Gastrocnemius medialis (tissue), 4 donors: ENCODE measurements at regions of chr19 and their contacts with region 1.

Region 1: DNA sequence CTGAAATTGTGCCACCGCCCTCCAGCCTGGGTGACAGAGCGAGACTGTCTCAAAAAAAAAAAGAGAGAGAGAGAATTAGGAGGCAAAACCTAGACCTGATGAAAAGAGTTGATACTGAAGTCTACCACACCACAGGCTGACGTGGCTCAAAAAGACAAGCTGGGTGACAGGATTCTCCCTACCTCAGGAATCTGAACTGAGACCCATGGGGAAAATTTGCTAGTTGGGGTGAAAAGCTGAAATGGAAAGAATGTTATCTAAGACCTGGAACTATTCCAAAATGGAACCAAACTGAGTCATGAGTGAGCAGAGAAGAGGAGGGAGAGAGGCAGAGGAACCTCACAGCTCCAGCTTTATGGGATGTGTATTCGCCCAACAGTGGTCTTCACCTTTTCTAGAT is 11.7 kb downstream of the SMG9 start:
- DNase-seq: no peak
- ATAC-seq: no peak
- H3K4me3 ChIP-seq: no peak overlapping the region
- H3K27ac ChIP-seq: no peak overlapping the region
- H3K4me1 ChIP-seq: no peaks in the 10 kb centered on the region
- H3K27me3 ChIP-seq: no peaks in the 10 kb centered on the region
- CTCF ChIP-seq: no peak
- POLR2A ChIP-seq: no peak

Region 2: GRCh38 chr19:43784981-43785808 is 42.2 kb after region 1 on chr19:
- in situ Hi-C with region 1: loop called in 2 of 4 experiments (anchors 5 kb)
- intact Hi-C with region 1: loop called (anchors 1 kb)
- DNase-seq: peak in 1 of 2 donors; percentile 20
- ATAC-seq: peak; percentile 74 to 81
- H3K4me3 ChIP-seq: no peak overlapping the region
- H3K27ac ChIP-seq: no peak overlapping the region
- H3K4me1 ChIP-seq: no peaks in the 10 kb centered on the region
- H3K27me3 ChIP-seq: peaks cover 0 to 8% (median 2%) of the 10 kb centered on the region in 3 donors
- CTCF ChIP-seq: peak; percentile 74 to 92 (median 89)
- POLR2A ChIP-seq: no peak

Region 3: DNA sequence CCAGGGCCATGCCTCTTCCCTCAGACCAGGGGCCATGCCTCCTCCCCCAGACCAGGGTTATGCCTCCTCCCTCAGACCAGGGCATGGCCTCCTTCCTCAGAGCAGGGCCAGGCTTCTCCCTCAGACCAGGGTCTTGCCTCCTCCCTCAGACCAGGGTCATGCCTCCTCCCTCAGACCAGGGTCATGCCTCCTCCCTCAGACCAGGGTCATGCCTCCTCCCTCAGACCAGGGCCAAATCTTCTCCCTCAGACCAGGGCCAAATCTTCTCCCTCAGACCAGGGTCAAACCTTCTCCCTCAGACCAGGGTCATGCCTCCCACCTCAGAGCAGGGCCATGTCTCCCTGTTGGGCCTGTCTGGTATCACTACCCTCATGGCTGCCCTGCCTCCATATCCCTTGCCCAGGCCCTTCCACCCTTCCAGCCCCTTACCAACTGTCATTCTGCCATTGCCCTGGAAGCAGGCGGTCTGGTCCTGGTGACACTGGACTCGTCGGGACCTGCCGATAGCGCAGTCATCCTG is 55.1 kb after region 1 on chr19:
- in situ Hi-C with region 1: no loop called
- intact Hi-C with region 1: no loop called
- DNase-seq: no peak
- ATAC-seq: no peak
- H3K4me3 ChIP-seq: peak overlapping the region in 3 of 4 donors; percentile 38 to 45 (median 40)
- H3K27ac ChIP-seq: no peak overlapping the region
- H3K4me1 ChIP-seq: no peaks in the 10 kb centered on the region
- H3K27me3 ChIP-seq: peaks cover 0 to 25% (median 21%) of the 10 kb centered on the region in 3 donors
- CTCF ChIP-seq: no peak
- POLR2A ChIP-seq: no peak

Region 4: GRCh38 chr19:43809762-43810696 is 67.0 kb after region 1 on chr19:
- in situ Hi-C with region 1: no loop called
- intact Hi-C with region 1: loop called (anchors 1 kb)
- DNase-seq: no peak
- ATAC-seq: no peak
- H3K4me3 ChIP-seq: no peak overlapping the region
- H3K27ac ChIP-seq: no peak overlapping the region
- H3K4me1 ChIP-seq: no peaks in the 10 kb centered on the region
- H3K27me3 ChIP-seq: peaks cover 0 to 3% (median 0%) of the 10 kb centered on the region in 3 donors
- CTCF ChIP-seq: peak in 3 of 5 experiments; percentile 24 to 53 (median 34)
- POLR2A ChIP-seq: no peak